ENCODE measurements at regions of chr14 and their contacts with region 1.

Region 1: GRCh38 chr14:72243309-72244293 is 311.4 kb downstream of the RGS6 start:
- DNase-seq: no peak
- H3K4me3 ChIP-seq: no peak overlapping the region
- H3K27ac ChIP-seq: no peak overlapping the region
- H3K4me1 ChIP-seq: no peaks in the 10 kb centered on the region
- H3K27me3 ChIP-seq: no peaks in the 10 kb centered on the region
- CTCF ChIP-seq: no peak

Region 2: DNA sequence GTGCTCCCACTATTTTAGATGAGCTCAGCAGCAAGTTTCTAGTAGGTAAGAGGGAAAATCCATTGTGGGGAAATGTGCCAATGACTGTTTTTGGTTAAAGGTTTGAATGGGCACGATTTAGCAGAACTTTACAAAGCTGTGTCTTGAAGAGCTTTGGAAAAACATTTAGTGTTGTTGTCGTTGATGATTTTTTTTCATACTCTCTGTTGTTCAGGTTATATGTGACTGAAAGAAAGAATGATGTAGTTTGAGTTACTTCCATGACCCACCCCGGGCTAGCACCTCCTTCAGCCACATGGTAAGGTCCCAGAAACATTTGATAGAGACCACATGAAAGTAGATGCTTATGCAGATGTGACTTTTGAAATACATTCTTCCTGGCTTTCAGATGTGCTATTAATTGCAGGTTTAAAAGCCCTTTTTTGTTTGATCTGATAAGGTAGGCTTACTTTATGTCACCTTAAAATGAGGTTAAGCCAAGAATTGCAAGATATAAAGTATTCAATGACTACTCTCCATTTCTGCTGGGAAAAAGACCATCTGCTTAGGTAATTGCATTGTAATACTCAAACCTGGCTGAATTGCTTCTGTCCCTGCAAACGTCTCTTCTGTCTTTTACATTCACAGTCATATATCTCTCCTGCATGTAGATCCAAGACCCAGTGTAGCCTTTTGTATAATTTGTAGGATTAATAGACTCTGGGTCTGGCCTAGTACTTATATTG is 60.7 kb before region 1 on chr14:
- CTCF ChIA-PET with region 1: no interaction called
- dilution Hi-C with region 1: loop called (anchors 5 kb)
- in situ Hi-C with region 1: no loop called
- intact Hi-C with region 1: no loop called
- DNase-seq: no peak
- H3K4me3 ChIP-seq: no peak overlapping the region
- H3K27ac ChIP-seq: no peak overlapping the region
- H3K4me1 ChIP-seq: no peaks in the 10 kb centered on the region
- H3K27me3 ChIP-seq: no peaks in the 10 kb centered on the region
- CTCF ChIP-seq: no peak

Measured in mammary epithelial cell (primary cell).